ENCODE measurements at regions of chr7 and their contacts with region 1.

Region 1: GRCh38 chr7:56174810-56175760 is 58.9 kb upstream of the NUPR2 start:
- DNase-seq: peak; percentile 13
- H3K27ac ChIP-seq: no peak overlapping the region
- CTCF ChIP-seq: no peak

Region 2: GRCh38 chr7:55723621-55723941 is 451.5 kb before region 1 on chr7:
- CTCF ChIA-PET with region 1: interaction called, 11 read pairs
- POLR2A ChIA-PET with region 1: no interaction called
- DNase-seq: no peak
- H3K27ac ChIP-seq: no peak overlapping the region
- CTCF ChIP-seq: no peak

Region 3: GRCh38 chr7:56229631-56230030 is 54.5 kb after region 1 on chr7:
- CTCF ChIA-PET with region 1: no interaction called
- POLR2A ChIA-PET with region 1: no interaction called
- DNase-seq: no peak
- H3K27ac ChIP-seq: no peak overlapping the region
- CTCF ChIP-seq: no peak

Region 4: DNA sequence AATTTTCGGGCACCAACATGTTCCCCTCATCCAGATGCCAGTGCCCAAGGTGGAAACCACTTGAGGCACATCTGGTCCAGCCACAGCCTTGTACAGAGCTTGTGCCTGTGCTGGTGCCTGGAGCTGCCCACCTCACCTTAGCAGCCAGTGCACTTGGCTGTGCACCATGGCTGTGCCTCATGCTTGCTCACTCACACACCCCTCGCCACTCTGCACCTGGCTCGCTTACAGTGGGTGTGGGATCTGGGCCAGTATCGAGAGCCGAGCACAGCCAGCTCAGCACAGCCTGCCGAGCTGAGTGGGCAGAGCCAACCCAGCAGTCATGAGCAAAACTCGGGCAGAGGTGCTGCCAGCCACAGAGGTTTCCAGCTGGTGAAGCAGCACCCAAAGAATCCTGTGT is 81.0 kb after region 1 on chr7:
- CTCF ChIA-PET with region 1: no interaction called
- POLR2A ChIA-PET with region 1: no interaction called
- DNase-seq: no peak
- H3K27ac ChIP-seq: no peak overlapping the region
- CTCF ChIP-seq: no peak

Measured in RWPE1 (cell line).